IMR-90 (cell line): ENCODE measurements at regions of chrX and their contacts with region 1.

Region 1: GRCh38 chrX:126030021-126030420 is 136.1 kb downstream of the DCAF12L2 start:
- DNase-seq: no peak
- ATAC-seq: no peak
- H3K4me3 ChIP-seq: no peak overlapping the region
- H3K27ac ChIP-seq: no peak overlapping the region
- H3K4me1 ChIP-seq: no peaks in the 10 kb centered on the region
- H3K27me3 ChIP-seq: no peaks in the 10 kb centered on the region
- CTCF ChIP-seq: no peak
- POLR2A ChIP-seq: no peak
- RAD21 ChIP-seq: no peak

Region 2: DNA sequence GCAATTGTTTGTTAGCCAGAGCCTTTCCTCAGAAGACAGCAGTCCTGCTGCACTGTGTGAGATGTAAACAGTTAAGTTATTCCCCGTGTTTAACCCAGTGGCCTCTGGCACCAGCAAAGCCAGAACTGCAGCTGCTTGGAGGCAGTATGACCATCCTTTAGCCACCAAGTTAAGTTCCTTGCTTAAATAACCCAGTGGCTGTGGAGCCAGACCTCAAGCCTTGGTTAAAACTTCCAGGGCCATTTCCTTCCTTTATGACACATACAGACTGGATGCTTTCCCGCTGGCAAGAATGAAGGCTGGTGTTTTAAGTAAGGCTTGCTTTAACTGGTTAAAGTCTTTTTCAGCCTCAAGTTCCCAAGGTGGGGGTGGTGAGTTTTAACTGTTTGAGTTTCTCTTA is 243.7 kb before region 1 on chrX:
- CTCF ChIA-PET with region 1: no interaction called
- POLR2A ChIA-PET with region 1: no interaction called
- dilution Hi-C with region 1: no loop called
- in situ Hi-C with region 1: no loop called
- intact Hi-C with region 1: no loop called
- DNase-seq: no peak
- ATAC-seq: no peak
- H3K4me3 ChIP-seq: no peak overlapping the region
- H3K27ac ChIP-seq: no peak overlapping the region
- H3K4me1 ChIP-seq: no peaks in the 10 kb centered on the region
- H3K27me3 ChIP-seq: no peaks in the 10 kb centered on the region
- CTCF ChIP-seq: no peak
- POLR2A ChIP-seq: no peak
- RAD21 ChIP-seq: no peak

Region 3: DNA sequence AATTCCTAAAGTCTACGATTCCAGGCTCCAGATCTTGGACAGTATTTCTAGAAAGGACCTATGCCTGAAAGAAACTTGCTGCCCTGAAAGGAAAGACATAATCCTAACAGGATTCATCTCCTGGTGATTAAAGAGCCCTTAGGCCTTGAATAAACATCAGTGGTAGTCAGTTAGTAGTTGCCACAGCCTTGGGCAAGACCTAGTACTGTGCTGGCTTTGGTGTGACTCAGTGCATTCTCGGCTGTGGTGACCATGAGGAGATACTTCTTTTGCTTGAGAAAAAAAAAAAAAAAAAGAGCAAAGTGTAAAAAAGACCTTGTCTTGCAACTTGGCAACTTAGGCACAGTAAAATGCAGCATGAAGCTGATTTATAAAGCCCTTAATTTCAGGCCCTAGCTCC is 52.2 kb before region 1 on chrX:
- CTCF ChIA-PET with region 1: no interaction called
- POLR2A ChIA-PET with region 1: no interaction called
- dilution Hi-C with region 1: no loop called
- in situ Hi-C with region 1: no loop called
- intact Hi-C with region 1: loop called (anchors 1 kb)
- DNase-seq: no peak
- ATAC-seq: no peak
- H3K4me3 ChIP-seq: no peak overlapping the region
- H3K27ac ChIP-seq: no peak overlapping the region
- H3K4me1 ChIP-seq: no peaks in the 10 kb centered on the region
- H3K27me3 ChIP-seq: no peaks in the 10 kb centered on the region
- CTCF ChIP-seq: no peak
- POLR2A ChIP-seq: no peak
- RAD21 ChIP-seq: no peak

Region 4: DNA sequence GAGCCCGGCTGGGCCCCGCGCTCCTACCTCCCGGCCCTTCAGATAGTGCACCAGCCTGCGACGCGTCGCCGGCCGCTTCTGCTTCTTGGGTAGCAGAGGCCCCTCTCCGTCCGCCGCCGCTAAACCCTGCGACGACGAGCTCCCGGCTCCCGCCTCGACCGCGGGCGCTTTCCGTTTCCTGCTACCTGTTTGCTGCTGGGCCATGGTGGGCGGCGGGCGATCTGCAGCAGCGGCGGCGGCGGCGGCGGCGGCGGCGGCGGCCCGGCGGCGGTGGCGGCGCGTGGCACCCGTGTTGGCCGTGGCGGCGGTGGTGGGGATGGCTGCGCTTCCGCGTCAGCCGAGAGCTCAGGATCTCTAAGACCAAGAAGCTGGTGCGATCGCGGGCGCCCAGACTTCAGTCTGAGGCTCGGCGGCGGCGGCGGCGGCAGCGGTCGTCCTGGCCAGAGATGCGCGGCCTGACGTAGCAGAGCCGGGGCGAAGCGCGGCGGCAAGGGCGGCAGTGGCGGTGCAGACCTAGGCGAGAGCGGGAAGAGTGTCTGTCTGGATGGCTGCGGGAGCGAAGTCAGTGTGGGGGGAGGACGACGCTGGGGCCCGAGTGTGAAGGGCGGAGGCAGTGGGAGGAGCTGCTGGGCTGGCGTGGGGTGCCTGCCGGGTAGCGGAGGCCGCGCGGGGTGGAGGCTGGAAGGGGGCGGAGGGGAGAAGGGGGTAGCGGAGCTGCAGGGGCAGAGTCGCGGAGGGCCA is 135.9 kb after region 1 on chrX and contains the start of gene DCAF12L2:
- CTCF ChIA-PET with region 1: no interaction called
- POLR2A ChIA-PET with region 1: no interaction called
- dilution Hi-C with region 1: no loop called
- in situ Hi-C with region 1: no loop called
- intact Hi-C with region 1: no loop called
- DNase-seq: no peak
- ATAC-seq: no peak
- H3K4me3 ChIP-seq: no peak within 1 kb of the TSS
- H3K27ac ChIP-seq: no peak within 1 kb of the TSS
- H3K4me1 ChIP-seq: no peaks in the 10 kb centered on the region
- H3K27me3 ChIP-seq: no peaks in the 10 kb centered on the region
- CTCF ChIP-seq: no peak
- POLR2A ChIP-seq: no peak
- RAD21 ChIP-seq: no peak
- total RNA-seq, gene DCAF12L2: not detected in 2 replicates